Right ventricle myocardium inferior (tissue), 1 donor: ENCODE measurements at regions of chr17 and their contacts with region 1.

Region 1: DNA sequence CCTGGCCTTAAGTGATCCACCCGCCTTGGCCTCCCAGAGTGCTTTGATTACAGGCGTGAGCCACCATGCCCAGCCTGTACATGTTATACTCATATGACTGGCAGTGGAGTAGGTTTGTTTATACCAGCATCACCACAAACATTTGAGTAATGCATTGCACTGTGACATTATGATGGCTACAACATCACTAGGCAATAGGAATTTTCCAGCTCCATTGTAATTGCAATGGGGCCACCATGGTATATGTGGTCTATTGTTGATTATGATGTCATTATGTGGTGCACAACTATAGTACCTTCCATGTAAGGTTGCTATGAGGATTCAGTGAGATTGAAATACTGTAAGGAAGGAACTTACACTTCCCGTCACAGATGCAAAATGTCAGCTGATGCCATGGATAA is 168.9 kb downstream of the COPRS start:
- DNase-seq: no peak
- ATAC-seq: no peak

Region 2: GRCh38 chr17:31570951-31571892 is 118.9 kb before region 1 on chr17:
- intact Hi-C with region 1: loop called (anchors 5 kb)
- DNase-seq: peak; percentile 91
- ATAC-seq: peak; percentile 84

Region 3: DNA sequence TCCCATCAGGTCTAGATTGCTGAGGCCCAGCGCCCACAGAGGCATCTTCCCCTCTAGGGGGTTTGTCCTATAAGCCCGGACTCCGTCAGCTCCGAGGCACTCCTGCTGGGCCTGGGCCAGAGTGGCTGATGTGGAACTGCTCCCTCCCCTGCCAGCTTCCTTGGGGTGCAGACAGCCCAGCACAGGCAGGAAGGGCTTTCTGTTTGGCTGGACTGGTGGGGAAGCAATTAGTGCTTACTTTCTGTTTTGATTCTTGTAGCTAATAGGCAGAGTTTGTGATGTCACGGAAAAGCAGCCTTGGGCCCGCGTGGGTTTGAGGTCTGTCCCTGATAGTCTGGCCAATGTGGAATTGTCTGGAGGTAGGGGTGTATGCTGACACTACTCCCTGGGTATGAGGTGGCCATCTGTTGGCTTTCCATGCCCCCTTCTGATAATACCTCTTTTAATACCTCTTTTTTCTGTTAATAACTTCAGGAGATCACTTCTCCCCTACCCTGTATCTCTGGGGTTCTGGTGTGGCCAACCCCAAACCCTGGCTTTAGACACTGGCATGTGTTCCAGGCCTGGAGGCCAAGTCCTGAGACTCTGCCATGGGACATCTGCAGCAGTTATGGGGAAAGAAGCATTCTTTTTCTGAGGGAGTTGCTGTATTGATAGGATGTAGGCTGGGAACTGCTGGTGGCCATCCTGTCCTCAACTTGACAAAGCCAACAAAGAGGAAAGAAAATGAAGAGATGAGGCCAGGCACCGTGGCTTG is 107.8 kb before region 1 on chr17:
- intact Hi-C with region 1: no loop called
- DNase-seq: peak; percentile 81
- ATAC-seq: peak; percentile 53